Activated naive CD4-positive, alpha-beta T cell treated with anti-CD3 and anti-CD28 coated beads for 36 hours (primary cell): ENCODE measurements at regions of chr3 and their contacts with region 1.

Region 1: DNA sequence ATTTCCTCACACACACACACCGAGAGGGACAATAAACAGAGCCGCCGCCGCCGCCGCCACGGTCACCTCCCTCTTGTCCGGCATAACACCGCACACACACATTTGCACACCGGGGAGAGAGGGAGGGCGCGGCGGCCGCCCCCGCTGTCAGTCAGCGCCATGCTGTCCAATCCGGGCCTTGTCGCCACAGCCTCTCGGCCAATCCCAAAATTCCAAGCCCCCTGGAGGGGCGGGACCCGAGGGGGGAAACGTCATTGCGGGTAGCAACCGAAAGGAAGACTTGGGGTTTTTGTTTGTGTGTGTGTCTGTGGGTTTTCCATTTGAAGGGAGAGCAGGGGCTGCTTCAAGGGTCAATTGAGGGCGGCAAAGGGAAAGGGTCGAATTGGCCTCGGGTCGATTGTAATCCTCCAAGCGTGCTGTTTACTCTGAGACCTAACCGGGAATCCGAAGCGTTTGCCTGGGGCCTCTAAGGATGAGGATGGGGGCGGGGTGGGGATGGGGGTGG is at the start of gene TOP2B:
- DNase-seq: peak; percentile 97
- H3K4me3 Mint-ChIP-seq: peak within 1 kb of the TSS; percentile 92
- H3K27ac Mint-ChIP-seq: peak within 1 kb of the TSS; percentile 100
- H3K4me1 Mint-ChIP-seq: peaks cover 42% of the 10 kb centered on the region
- H3K27me3 Mint-ChIP-seq: no peaks in the 10 kb centered on the region
- total RNA-seq, gene TOP2B: 113 to 114 TPM

Region 2: GRCh38 chr3:25396686-25397085 is 268.2 kb before region 1 on chr3:
- CTCF ChIA-PET with region 1: no interaction called
- intact Hi-C with region 1: no loop called
- DNase-seq: no peak
- H3K4me3 Mint-ChIP-seq: no peak overlapping the region
- H3K27ac Mint-ChIP-seq: no peak overlapping the region
- H3K4me1 Mint-ChIP-seq: no peaks in the 10 kb centered on the region
- H3K27me3 Mint-ChIP-seq: peaks cover 5% of the 10 kb centered on the region

Region 3: GRCh38 chr3:25707268-25707926 is 42.5 kb after region 1 on chr3:
- CTCF ChIA-PET with region 1: no interaction called
- intact Hi-C with region 1: no loop called
- DNase-seq: no peak
- H3K4me3 Mint-ChIP-seq: no peak overlapping the region
- H3K27ac Mint-ChIP-seq: no peak overlapping the region
- H3K4me1 Mint-ChIP-seq: no peaks in the 10 kb centered on the region
- H3K27me3 Mint-ChIP-seq: peaks cover 7% of the 10 kb centered on the region

Region 4: DNA sequence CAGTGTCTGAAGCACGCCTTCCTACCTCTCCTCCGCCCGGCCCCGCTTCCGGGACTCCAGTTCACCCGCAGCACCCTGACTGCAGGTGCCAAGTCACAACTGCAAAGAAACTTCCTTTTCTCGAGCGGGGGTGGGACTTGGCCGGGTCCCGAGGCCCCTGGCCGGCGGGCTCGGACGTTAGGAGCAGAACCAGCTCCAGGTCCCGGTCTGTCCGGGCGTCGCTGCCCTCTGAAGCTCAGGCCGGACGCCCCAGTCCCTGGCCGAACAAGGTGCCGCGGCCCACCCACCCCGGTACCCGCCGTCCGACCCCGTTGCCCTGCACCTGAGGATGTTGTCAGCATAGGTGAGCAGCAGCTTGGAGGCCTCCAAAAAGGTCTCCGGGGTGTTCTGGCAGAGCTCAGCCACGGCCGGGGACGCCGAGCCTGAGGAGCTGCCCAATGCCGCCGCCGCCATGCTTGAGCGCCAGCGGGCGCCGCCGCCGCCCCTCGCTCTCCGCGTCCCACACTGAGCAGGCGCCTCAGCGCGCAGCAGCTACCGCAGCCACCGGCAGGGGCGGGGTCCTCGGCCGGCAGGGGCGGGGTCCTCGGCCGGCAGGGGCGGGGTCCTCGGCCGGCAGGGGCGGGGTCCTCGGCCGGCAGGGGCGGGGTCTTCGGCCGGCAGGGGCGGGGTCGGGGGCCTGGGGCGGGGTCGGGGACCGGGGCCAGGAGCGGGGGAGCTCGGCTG is 118.2 kb after region 1 on chr3 and contains the start of gene NGLY1:
- CTCF ChIA-PET with region 1: interaction called, 3 read pairs
- intact Hi-C with region 1: loop called (anchors 1 kb)
- DNase-seq: peak; percentile 87
- H3K4me3 Mint-ChIP-seq: peak within 1 kb of the TSS; percentile 88
- H3K27ac Mint-ChIP-seq: peak within 1 kb of the TSS; percentile 88
- H3K4me1 Mint-ChIP-seq: peaks cover 40% of the 10 kb centered on the region
- H3K27me3 Mint-ChIP-seq: no peaks in the 10 kb centered on the region
- total RNA-seq, gene NGLY1: 49.0 to 50.0 TPM

Region 5: DNA sequence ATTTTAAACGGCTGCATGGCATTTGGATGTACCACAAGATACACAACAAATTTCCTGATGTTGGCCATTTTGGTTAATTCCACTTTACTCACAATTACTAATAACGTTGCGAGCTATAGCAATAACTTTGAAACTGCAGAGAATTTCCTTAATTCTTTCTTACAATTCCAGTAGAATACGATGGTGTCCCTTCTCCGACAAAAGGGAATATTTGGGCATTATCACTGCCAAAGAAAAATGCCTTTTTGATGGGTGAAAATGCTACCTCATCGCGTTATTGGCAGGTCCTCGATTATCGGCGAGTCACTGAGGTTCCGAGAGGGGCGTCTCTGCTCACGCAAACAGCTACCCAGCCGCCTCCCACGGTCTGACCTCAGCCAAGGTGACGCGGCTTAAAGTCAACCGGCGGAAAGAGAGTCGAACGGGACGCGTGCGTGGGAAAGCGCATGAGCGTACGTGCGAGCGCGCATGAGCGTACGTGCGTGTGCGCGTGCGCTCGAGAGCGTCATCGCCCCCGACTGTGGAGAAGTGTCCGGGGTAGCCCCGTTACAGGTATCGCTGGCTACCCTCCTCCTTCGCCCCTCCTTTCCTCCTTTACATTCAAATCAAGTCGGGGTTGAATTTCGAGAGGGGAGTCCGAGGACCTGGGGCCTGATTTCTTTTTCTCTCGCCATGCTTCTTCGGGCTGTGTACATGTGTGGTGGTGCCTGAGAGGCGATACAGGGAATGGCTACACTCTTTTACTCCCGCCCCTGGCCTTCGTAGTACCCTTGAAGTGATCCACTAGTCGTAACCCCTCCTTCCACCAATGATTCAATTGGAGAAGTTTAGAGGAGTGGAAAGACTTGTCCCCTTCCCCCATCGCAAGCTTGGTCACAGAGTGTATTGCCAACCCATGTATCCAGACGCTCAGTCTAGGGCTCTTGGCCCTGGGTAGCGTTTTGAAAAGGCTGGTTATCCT is 125.0 kb after region 1 on chr3 and contains the start of gene OXSM:
- CTCF ChIA-PET with region 1: interaction called, 3 read pairs
- intact Hi-C with region 1: loop called (anchors 1 kb)
- DNase-seq: peak; percentile 93
- H3K4me3 Mint-ChIP-seq: peak within 1 kb of the TSS; percentile 97
- H3K27ac Mint-ChIP-seq: peak within 1 kb of the TSS; percentile 97
- H3K4me1 Mint-ChIP-seq: peaks cover 42% of the 10 kb centered on the region
- H3K27me3 Mint-ChIP-seq: no peaks in the 10 kb centered on the region
- total RNA-seq, gene OXSM: 10.0 to 11.4 TPM

Region 6: GRCh38 chr3:25856902-25857518 is 192.1 kb after region 1 on chr3:
- CTCF ChIA-PET with region 1: interaction called, 3 read pairs
- intact Hi-C with region 1: loop called (anchors 1 kb)
- DNase-seq: peak; percentile 27
- H3K4me3 Mint-ChIP-seq: no peak overlapping the region
- H3K27ac Mint-ChIP-seq: no peak overlapping the region
- H3K4me1 Mint-ChIP-seq: peaks cover 2% of the 10 kb centered on the region
- H3K27me3 Mint-ChIP-seq: no peaks in the 10 kb centered on the region

Region 7: DNA sequence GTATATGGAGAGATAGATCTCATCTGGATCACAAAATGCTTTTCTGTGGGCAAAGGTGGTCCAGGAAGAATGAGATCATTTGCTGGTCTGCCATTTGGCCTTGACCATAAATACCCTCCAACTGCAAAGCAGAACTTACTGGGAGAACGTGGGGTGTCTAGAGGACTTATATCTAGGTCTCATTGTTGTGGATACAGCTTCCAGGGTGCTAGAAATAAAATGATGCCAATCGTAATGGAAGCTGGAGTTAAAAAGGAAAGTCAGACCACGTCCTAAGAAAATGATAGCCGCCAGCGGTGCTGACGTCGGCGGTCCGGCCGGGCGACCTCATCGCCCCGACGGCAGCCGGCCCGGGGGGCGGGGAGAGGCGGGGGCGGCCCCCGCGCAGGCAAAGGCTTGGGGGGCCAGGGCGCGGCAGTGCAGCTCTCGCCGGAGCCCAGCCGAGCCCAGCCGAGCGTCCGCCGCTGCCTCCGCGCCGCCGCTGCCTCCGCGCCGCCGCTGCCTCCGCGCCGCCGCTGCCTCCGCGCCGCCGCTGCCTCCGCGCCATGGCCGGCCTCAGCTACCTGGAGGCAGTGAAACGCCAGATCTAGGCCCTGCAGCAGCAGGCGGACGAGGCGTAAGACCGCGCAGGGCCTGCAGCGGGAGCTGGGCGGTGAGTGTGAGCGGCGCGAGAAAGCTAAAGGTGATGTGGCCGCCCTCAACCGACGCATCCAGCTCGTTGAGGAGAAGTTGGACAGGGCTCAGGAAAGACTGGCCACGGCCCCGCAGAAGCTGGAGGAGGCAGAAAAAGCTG is 1967.8 kb after region 1 on chr3:
- CTCF ChIA-PET with region 1: no interaction called
- intact Hi-C with region 1: loop called (anchors 10 kb)
- DNase-seq: peak; percentile 42
- H3K4me3 Mint-ChIP-seq: peak overlapping the region; percentile 80
- H3K27ac Mint-ChIP-seq: peak overlapping the region; percentile 22
- H3K4me1 Mint-ChIP-seq: peaks cover 17% of the 10 kb centered on the region
- H3K27me3 Mint-ChIP-seq: no peaks in the 10 kb centered on the region